Heart left ventricle (tissue), 16 donors: ENCODE measurements at regions of chr7 and their contacts with region 1.

Region 1: GRCh38 chr7:104382616-104383015 is 54.2 kb downstream of the LHFPL3 start:
- DNase-seq: no peak
- ATAC-seq: no peak
- H3K4me3 ChIP-seq: no peak overlapping the region
- H3K27ac ChIP-seq: no peak overlapping the region
- H3K4me1 ChIP-seq: no peaks in the 10 kb centered on the region
- H3K27me3 ChIP-seq: no peaks in the 10 kb centered on the region
- CTCF ChIP-seq: no peak
- POLR2A ChIP-seq: no peak

Region 2: DNA sequence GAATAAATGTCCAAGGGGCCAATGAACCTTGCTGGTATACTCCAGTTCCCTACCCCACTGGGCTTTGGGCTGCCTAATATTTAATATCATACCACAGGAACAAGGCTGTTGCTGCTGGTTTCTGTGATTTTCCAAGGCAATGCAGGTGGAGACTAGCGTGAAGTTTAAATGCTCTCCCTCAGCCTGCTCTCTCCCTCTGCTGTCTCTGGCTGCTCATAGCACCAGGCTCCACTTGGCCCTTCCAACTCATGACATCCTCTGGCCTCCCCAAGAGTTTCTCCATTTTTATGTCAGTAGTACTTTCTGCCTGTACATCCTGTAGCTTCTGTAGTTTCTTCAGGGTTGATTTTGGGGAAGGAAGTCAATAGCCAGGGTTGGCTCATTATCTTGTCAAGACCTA is 49.3 kb after region 1 on chr7:
- intact Hi-C with region 1: no loop called
- DNase-seq: no peak
- ATAC-seq: no peak
- H3K4me3 ChIP-seq: no peak overlapping the region
- H3K27ac ChIP-seq: no peak overlapping the region
- H3K4me1 ChIP-seq: no peaks in the 10 kb centered on the region
- H3K27me3 ChIP-seq: no peaks in the 10 kb centered on the region
- CTCF ChIP-seq: no peak
- POLR2A ChIP-seq: no peak

Region 3: GRCh38 chr7:104442481-104442880 is 59.9 kb after region 1 on chr7:
- intact Hi-C with region 1: loop called in 1 of 10 experiments (anchors 10 kb)
- DNase-seq: no peak
- ATAC-seq: no peak
- H3K4me3 ChIP-seq: no peak overlapping the region
- H3K27ac ChIP-seq: no peak overlapping the region
- H3K4me1 ChIP-seq: no peaks in the 10 kb centered on the region
- H3K27me3 ChIP-seq: no peaks in the 10 kb centered on the region
- CTCF ChIP-seq: no peak
- POLR2A ChIP-seq: no peak